Psoas muscle (tissue), 8 donors: ENCODE measurements at regions of chr18 and their contacts with region 1.

Region 1: GRCh38 chr18:46173393-46174341 is 69.5 kb downstream of the HAUS1 start:
- DNase-seq: peak; percentile 95 to 98
- ATAC-seq: peak; percentile 91 to 94 (median 93)
- H3K4me3 ChIP-seq: peak overlapping the region; percentile 80
- H3K27ac ChIP-seq: peak overlapping the region; percentile 94
- H3K4me1 ChIP-seq: peaks cover 26% of the 10 kb centered on the region
- H3K27me3 ChIP-seq: no peaks in the 10 kb centered on the region
- CTCF ChIP-seq: peak; percentile 80

Region 2: GRCh38 chr18:45863469-45863868 is 310.2 kb before region 1 on chr18:
- intact Hi-C with region 1: no loop called
- DNase-seq: no peak
- ATAC-seq: no peak
- H3K4me3 ChIP-seq: no peak overlapping the region
- H3K27ac ChIP-seq: no peak overlapping the region
- H3K4me1 ChIP-seq: no peaks in the 10 kb centered on the region
- H3K27me3 ChIP-seq: no peaks in the 10 kb centered on the region
- CTCF ChIP-seq: no peak

Region 3: DNA sequence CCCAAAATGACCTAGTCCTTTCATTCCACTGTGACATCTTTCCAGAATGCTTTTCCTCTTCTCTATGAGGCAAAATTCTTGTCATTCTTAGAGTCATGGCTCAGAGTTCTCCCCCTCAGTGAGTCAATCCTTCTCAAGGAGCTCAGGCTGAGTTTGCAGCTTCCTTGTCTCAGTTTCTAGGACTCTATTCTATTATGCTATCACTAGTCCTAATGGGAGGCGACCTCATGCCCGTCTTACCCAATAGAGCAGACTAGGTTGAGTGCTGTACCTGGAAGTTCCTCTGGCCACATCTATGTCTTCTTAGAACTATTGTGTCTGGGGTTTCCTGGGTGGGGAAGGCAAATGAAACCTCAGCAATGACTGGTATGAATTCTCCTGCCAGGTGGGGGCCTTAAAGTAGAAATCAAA is 18.0 kb before region 1 on chr18:
- intact Hi-C with region 1: loop called in 1 of 2 experiments (anchors 2 kb)
- DNase-seq: no peak
- ATAC-seq: no peak
- H3K4me3 ChIP-seq: no peak overlapping the region
- H3K27ac ChIP-seq: no peak overlapping the region
- H3K4me1 ChIP-seq: peaks cover 40% of the 10 kb centered on the region
- H3K27me3 ChIP-seq: no peaks in the 10 kb centered on the region
- CTCF ChIP-seq: no peak

Region 4: GRCh38 chr18:46213295-46213694 is 39.6 kb after region 1 on chr18:
- intact Hi-C with region 1: loop called (anchors 2 to 5 kb)
- DNase-seq: no peak
- ATAC-seq: peak; percentile 21 to 81 (median 68)
- H3K4me3 ChIP-seq: no peak overlapping the region
- H3K27ac ChIP-seq: peak overlapping the region; percentile 61
- H3K4me1 ChIP-seq: peaks cover 40% of the 10 kb centered on the region
- H3K27me3 ChIP-seq: no peaks in the 10 kb centered on the region
- CTCF ChIP-seq: peak; percentile 52

Region 5: GRCh38 chr18:46250084-46250811 is 76.6 kb after region 1 on chr18:
- intact Hi-C with region 1: loop called in 1 of 2 experiments (anchors 10 kb)
- DNase-seq: no peak
- ATAC-seq: peak in 3 of 4 donors; percentile 40 to 47 (median 42)
- H3K4me3 ChIP-seq: no peak overlapping the region
- H3K27ac ChIP-seq: peak overlapping the region; percentile 25
- H3K4me1 ChIP-seq: peaks cover 27% of the 10 kb centered on the region
- H3K27me3 ChIP-seq: no peaks in the 10 kb centered on the region
- CTCF ChIP-seq: no peak

Region 6: DNA sequence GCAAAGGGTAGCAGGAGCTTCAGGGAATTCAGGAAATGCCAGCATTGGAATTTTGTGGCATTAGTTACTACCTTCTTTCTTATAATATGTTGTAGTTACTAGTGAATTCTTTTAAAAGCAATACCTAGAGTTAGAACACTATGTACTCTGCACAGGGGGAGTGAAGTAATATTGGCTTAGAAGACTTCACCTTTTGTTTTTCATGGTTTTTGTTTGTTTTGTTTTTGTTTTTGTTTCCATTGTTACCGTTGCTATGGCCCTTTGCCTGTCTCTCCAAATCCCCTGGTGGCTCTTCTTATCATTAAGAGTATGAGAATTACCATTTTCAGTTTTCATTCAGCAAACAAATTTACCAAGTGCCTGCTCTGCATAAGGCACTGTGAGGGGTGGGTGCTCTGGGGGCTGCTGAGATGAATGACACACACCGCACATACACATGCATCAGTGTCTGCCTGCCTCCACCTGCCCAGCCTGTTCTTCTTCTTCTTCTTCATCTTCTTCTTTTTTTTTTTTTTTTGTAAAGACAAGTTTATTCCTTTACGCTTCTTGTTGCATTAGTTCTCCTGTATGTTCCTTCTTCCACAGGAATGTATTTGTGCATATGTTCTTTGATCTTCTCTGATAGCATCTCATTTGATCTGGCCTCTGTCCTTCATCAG is 90.7 kb after region 1 on chr18:
- intact Hi-C with region 1: loop called (anchors 2 to 10 kb)
- DNase-seq: no peak
- ATAC-seq: no peak
- H3K4me3 ChIP-seq: no peak overlapping the region
- H3K27ac ChIP-seq: no peak overlapping the region
- H3K4me1 ChIP-seq: peaks cover 70% of the 10 kb centered on the region
- H3K27me3 ChIP-seq: no peaks in the 10 kb centered on the region
- CTCF ChIP-seq: no peak

Region 7: DNA sequence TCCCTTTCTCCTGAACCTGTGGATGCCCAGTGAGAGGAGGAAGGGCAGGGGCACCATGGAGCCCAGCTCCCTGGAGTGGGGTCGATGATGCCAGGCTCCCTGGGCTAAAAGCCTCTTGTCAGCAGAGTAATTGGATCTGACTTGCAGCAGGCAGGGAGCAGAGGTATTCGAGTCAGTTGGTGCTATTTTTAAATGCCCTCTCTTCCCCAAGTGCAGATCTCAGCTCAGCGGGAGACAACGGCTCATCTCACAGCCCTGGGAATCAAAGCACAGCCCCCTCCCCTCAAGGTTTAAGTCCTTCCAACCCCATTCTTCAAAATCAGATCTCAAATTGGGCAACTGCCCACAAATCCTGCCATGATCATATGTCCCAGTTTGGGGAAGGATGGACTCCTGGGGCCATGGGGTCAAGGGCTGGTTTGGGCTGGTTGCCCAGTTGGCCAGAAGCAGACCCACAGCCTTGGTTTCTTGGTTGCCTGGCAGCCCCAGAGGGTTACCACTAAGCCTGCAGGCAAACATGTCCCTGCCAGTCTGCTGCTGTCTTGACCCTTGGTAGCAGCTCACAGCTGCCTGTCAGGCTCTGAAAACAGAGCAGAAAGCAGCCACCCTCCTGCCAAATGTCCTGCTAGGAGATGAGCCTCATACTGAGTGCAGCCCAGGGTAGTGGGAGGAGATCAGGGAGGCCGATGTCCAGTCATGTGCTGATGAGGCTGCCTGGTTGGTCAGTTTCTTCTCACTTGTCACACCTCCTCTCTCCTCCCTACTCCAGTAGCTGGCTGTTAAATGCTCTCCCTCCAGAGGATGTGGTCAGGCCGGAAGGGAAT is 238.4 kb after region 1 on chr18:
- intact Hi-C with region 1: loop called in 1 of 2 experiments (anchors 10 kb)
- DNase-seq: peak; percentile 58 to 81
- ATAC-seq: peak; percentile 84 to 91 (median 86)
- H3K4me3 ChIP-seq: peak overlapping the region; percentile 8
- H3K27ac ChIP-seq: peak overlapping the region; percentile 91
- H3K4me1 ChIP-seq: peaks cover 75% of the 10 kb centered on the region
- H3K27me3 ChIP-seq: no peaks in the 10 kb centered on the region
- CTCF ChIP-seq: no peak

Region 8: GRCh38 chr18:46660955-46661749 is 487.5 kb after region 1 on chr18:
- intact Hi-C with region 1: loop called in 1 of 2 experiments (anchors 1 kb)
- DNase-seq: no peak
- ATAC-seq: peak; percentile 59 to 84 (median 80)
- H3K4me3 ChIP-seq: no peak overlapping the region
- H3K27ac ChIP-seq: no peak overlapping the region
- H3K4me1 ChIP-seq: no peaks in the 10 kb centered on the region
- H3K27me3 ChIP-seq: no peaks in the 10 kb centered on the region
- CTCF ChIP-seq: no peak